ENCODE measurements at regions of chr3 and their contacts with region 1.

Region 1: GRCh38 chr3:153161138-153161713 is 800 bp upstream of the RAP2B start:
- DNase-seq: peak; percentile 96
- ATAC-seq: peak; percentile 84
- H3K4me3 ChIP-seq: peak overlapping the region; percentile 98
- H3K27ac ChIP-seq: peak overlapping the region; percentile 97
- H3K4me1 ChIP-seq: peaks cover 11% of the 10 kb centered on the region
- H3K27me3 ChIP-seq: no peaks in the 10 kb centered on the region
- CTCF ChIP-seq: no peak
- EP300 ChIP-seq: 0 out of 4 replicates have a peak, but pooled peaks of 1 of the 2 experiments have one; percentile 21
- POLR2A ChIP-seq: no peak; the same call in 1 of the 2 replicates
- RAD21 ChIP-seq: no peak

Region 2: GRCh38 chr3:152879130-152879789 is 282.0 kb before region 1 on chr3:
- CTCF ChIA-PET with region 1: no interaction called
- POLR2A ChIA-PET with region 1: no interaction called
- RAD21 ChIA-PET with region 1: no interaction called
- SMC1A ChIA-PET with region 1: no interaction called
- in situ Hi-C with region 1: no loop called
- intact Hi-C with region 1: no loop called
- DNase-seq: peak; percentile 13
- ATAC-seq: no peak; the same call in 2 of the 3 replicates
- H3K4me3 ChIP-seq: no peak overlapping the region
- H3K27ac ChIP-seq: no peak overlapping the region
- H3K4me1 ChIP-seq: no peaks in the 10 kb centered on the region
- H3K27me3 ChIP-seq: no peaks in the 10 kb centered on the region
- CTCF ChIP-seq: no peak
- EP300 ChIP-seq: no peak
- POLR2A ChIP-seq: no peak
- RAD21 ChIP-seq: no peak

Region 3: DNA sequence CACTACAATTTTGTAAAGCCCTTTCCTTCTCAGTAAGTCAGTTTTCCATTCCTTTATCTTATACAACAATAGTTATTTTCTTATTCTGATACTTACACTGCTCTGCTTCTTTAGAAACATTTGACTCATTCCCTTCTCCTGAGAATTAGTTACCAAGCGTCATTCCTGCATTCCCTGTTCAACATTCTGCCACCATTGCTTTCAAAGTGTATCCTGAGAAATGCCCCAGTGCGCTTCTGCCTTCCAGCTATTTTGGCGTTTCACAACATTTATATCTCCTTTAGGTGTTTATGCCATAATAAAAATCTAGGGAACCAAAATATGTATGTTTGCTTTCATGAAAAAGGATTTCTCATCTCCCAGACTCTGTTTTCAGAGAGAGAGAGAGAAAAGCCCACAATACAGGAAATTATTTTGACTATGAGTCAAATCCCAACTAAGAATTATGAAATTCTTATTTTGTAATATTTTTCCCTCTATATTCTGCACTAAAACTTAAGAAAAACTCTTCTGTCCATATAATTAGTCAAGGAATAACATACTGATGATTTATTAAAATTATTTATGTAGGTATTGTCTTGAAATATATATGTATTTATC is 117.4 kb before region 1 on chr3:
- CTCF ChIA-PET with region 1: interaction called, 13 read pairs
- POLR2A ChIA-PET with region 1: no interaction called
- RAD21 ChIA-PET with region 1: interaction called, 14 read pairs
- SMC1A ChIA-PET with region 1: interaction called, 3 read pairs
- in situ Hi-C with region 1: no loop called
- intact Hi-C with region 1: loop called (anchors 1 kb)
- DNase-seq: no peak
- ATAC-seq: no peak
- H3K4me3 ChIP-seq: no peak overlapping the region
- H3K27ac ChIP-seq: no peak overlapping the region
- H3K4me1 ChIP-seq: no peaks in the 10 kb centered on the region
- H3K27me3 ChIP-seq: no peaks in the 10 kb centered on the region
- CTCF ChIP-seq: no peak
- EP300 ChIP-seq: no peak
- POLR2A ChIP-seq: no peak
- RAD21 ChIP-seq: no peak

Region 4: GRCh38 chr3:153138276-153139210 is 22.7 kb before region 1 on chr3:
- CTCF ChIA-PET with region 1: interaction called, 3 read pairs
- POLR2A ChIA-PET with region 1: interaction called, 7 read pairs
- RAD21 ChIA-PET with region 1: interaction called, 9 read pairs
- SMC1A ChIA-PET with region 1: interaction called, 11 read pairs
- in situ Hi-C with region 1: no loop called
- intact Hi-C with region 1: loop called (anchors 2 kb)
- DNase-seq: peak; percentile 89
- ATAC-seq: peak; percentile 83
- H3K4me3 ChIP-seq: no peak overlapping the region
- H3K27ac ChIP-seq: peak overlapping the region; percentile 55
- H3K4me1 ChIP-seq: peaks cover 28% of the 10 kb centered on the region
- H3K27me3 ChIP-seq: no peaks in the 10 kb centered on the region
- CTCF ChIP-seq: no peak
- EP300 ChIP-seq: peak; percentile 82 to 91
- POLR2A ChIP-seq: no peak
- RAD21 ChIP-seq: no peak

Region 5: GRCh38 chr3:153150991-153151390 is 10.2 kb before region 1 on chr3:
- CTCF ChIA-PET with region 1: interaction called, 3 read pairs
- POLR2A ChIA-PET with region 1: interaction called, 5 read pairs
- RAD21 ChIA-PET with region 1: interaction called, 3 read pairs
- SMC1A ChIA-PET with region 1: interaction called, 13 read pairs
- in situ Hi-C with region 1: no loop called
- intact Hi-C with region 1: no loop called
- DNase-seq: no peak
- ATAC-seq: no peak
- H3K4me3 ChIP-seq: no peak overlapping the region
- H3K27ac ChIP-seq: no peak overlapping the region
- H3K4me1 ChIP-seq: no peaks in the 10 kb centered on the region
- H3K27me3 ChIP-seq: no peaks in the 10 kb centered on the region
- CTCF ChIP-seq: no peak
- EP300 ChIP-seq: no peak
- POLR2A ChIP-seq: no peak
- RAD21 ChIP-seq: no peak

Region 6: DNA sequence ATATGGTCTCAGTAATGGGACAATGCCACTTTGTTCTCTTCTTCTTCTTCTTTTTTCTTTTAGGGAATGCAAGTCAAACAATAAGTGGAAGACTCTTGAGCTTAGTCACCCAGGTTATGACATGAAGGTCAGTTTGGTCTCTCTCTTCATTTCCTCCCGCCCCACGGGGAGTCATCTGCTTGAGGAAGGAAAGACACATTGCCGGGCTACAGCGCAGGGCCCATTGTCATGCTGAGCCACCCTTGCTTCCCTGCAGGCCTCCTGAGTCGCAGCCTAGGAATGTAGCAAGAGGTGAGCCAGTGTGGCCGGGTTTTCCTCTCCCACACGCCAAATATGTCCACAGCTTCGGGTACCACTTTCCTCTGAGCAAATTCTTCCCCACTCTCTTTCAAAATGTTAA is 48.4 kb after region 1 on chr3:
- CTCF ChIA-PET with region 1: no interaction called
- POLR2A ChIA-PET with region 1: no interaction called
- RAD21 ChIA-PET with region 1: no interaction called
- SMC1A ChIA-PET with region 1: no interaction called
- in situ Hi-C with region 1: no loop called
- intact Hi-C with region 1: no loop called
- DNase-seq: no peak
- ATAC-seq: no peak
- H3K4me3 ChIP-seq: no peak overlapping the region
- H3K27ac ChIP-seq: no peak overlapping the region
- H3K4me1 ChIP-seq: no peaks in the 10 kb centered on the region
- H3K27me3 ChIP-seq: no peaks in the 10 kb centered on the region
- CTCF ChIP-seq: no peak
- EP300 ChIP-seq: no peak
- POLR2A ChIP-seq: no peak
- RAD21 ChIP-seq: no peak

Region 7: GRCh38 chr3:153252963-153253362 is 91.7 kb after region 1 on chr3:
- CTCF ChIA-PET with region 1: no interaction called
- POLR2A ChIA-PET with region 1: no interaction called
- RAD21 ChIA-PET with region 1: no interaction called
- SMC1A ChIA-PET with region 1: no interaction called
- in situ Hi-C with region 1: no loop called
- intact Hi-C with region 1: no loop called
- DNase-seq: no peak
- ATAC-seq: no peak
- H3K4me3 ChIP-seq: no peak overlapping the region
- H3K27ac ChIP-seq: no peak overlapping the region
- H3K4me1 ChIP-seq: no peaks in the 10 kb centered on the region
- H3K27me3 ChIP-seq: no peaks in the 10 kb centered on the region; a peak in 1 of 4 replicates
- CTCF ChIP-seq: no peak
- EP300 ChIP-seq: no peak
- POLR2A ChIP-seq: no peak
- RAD21 ChIP-seq: no peak

Region 8: DNA sequence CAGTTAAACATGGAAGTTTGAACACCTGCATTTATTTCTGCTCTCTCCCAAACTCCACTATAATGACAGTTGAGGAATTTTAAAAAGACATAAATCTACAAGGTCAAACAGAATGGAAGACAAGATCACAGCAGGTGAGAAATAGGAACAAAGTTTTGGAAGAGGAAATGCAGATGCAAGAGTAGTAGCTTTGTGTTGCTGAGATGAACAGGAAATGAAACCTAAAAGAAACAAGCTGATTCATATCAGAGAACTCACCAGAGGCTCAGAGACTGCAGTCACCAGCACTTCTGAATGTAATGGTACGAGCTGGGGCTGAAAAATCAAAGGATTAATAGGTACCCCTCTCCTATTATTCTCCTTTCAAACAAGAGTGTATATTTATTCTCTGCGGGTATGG is 460.7 kb after region 1 on chr3:
- CTCF ChIA-PET with region 1: no interaction called
- POLR2A ChIA-PET with region 1: no interaction called
- RAD21 ChIA-PET with region 1: no interaction called
- SMC1A ChIA-PET with region 1: no interaction called
- in situ Hi-C with region 1: no loop called
- intact Hi-C with region 1: loop called (anchors 10 kb)
- DNase-seq: peak; percentile 34
- ATAC-seq: peak; percentile 89
- H3K4me3 ChIP-seq: no peak overlapping the region
- H3K27ac ChIP-seq: no peak overlapping the region
- H3K4me1 ChIP-seq: peaks cover 7% of the 10 kb centered on the region
- H3K27me3 ChIP-seq: no peaks in the 10 kb centered on the region
- CTCF ChIP-seq: no peak
- EP300 ChIP-seq: no peak
- POLR2A ChIP-seq: no peak
- RAD21 ChIP-seq: no peak

Region 9: DNA sequence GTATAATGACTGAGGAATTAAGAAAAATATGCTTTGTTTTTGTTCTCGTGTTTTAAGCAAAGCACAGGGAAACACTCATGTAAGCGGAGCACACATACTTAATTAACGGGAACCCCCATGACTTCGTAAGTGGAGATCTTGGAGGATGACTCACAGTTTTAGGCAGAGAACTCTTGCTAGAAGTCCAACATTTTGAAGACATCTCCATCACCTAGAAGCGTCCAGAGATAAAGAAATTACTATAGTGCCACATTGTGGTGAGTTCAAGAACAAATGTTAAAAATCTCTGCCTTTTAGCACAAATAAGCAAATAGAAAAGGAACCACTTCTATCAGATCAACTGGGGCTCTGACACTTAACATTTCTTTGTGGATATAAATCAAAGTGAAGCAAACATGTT is 765.9 kb after region 1 on chr3:
- CTCF ChIA-PET with region 1: no interaction called
- POLR2A ChIA-PET with region 1: no interaction called
- RAD21 ChIA-PET with region 1: no interaction called
- SMC1A ChIA-PET with region 1: no interaction called
- in situ Hi-C with region 1: no loop called
- intact Hi-C with region 1: loop called (anchors 10 kb)
- DNase-seq: peak; percentile 2
- ATAC-seq: peak; percentile 85
- H3K4me3 ChIP-seq: no peak overlapping the region
- H3K27ac ChIP-seq: no peak overlapping the region
- H3K4me1 ChIP-seq: no peaks in the 10 kb centered on the region
- H3K27me3 ChIP-seq: no peaks in the 10 kb centered on the region
- CTCF ChIP-seq: peak in 1 of 3 experiments; percentile 36; a peak in 2 of 6 replicates
- EP300 ChIP-seq: no peak
- POLR2A ChIP-seq: no peak
- RAD21 ChIP-seq: no peak

Region 10: GRCh38 chr3:154310840-154311239 is 1149.6 kb after region 1 on chr3:
- CTCF ChIA-PET with region 1: no interaction called
- POLR2A ChIA-PET with region 1: no interaction called
- RAD21 ChIA-PET with region 1: no interaction called
- SMC1A ChIA-PET with region 1: no interaction called
- in situ Hi-C with region 1: no loop called
- intact Hi-C with region 1: loop called (anchors 10 kb)
- DNase-seq: no peak
- ATAC-seq: no peak
- H3K4me3 ChIP-seq: no peak overlapping the region
- H3K27ac ChIP-seq: no peak overlapping the region
- H3K4me1 ChIP-seq: no peaks in the 10 kb centered on the region; the same call in 1 of the 2 replicates
- H3K27me3 ChIP-seq: no peaks in the 10 kb centered on the region
- CTCF ChIP-seq: no peak
- EP300 ChIP-seq: no peak
- POLR2A ChIP-seq: no peak
- RAD21 ChIP-seq: no peak

Measured in GM12878 (cell line).